HEK293 (cell line): ENCODE measurements at regions of chr12 and their contacts with region 1.

Region 1: DNA sequence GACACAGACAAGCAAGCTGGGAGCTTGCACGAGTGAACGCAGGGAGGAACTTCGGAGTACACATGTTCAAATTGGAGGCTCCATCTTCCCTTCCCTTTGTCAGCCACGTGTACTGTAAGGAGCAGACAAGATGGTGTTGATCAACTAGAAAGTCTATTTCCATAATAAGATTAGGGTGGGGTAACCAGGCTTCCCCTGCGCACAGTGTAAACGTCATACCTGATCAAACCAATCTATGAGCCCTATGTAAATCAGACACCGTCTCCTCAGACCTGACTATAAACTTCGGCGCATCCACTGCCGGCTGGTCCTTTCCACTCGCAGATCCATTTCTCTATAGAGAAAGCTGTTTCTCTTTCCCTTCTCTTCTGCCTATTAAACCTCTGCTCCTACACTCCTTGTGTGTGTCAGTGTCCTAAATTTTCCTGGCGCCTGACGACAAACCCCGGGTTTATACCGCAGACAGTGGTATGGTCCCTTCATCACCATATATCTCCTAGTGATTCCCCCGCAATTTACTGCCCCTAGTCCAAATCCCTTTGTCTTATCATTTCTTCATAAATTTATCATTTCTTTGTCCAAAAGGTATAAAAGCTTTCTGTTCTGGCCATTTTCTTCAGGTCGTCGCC is 7.5 kb upstream of the ETFBKMT start:
- H3K4me3 ChIP-seq: no peak overlapping the region
- H3K27ac ChIP-seq: no peak overlapping the region
- H3K4me1 ChIP-seq: no peaks in the 10 kb centered on the region
- CTCF ChIP-seq: no peak

Region 2: DNA sequence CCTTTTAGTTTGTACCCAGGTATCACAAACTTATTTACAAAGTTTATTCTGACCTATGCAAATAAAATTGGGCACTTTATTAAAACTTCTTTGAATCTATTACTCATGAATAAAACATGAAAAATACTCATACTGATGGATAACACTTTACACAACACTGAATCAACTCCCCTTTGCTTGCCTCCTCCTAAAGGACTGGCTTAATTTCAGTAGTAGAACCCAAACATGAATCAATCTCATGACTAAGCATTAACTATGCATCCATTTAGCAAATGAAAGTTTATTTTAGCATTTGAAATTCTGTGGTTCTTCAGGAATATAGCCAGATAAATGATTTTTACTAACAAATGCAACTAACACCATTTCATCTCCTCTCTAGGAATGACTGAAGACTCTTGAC is 93.5 kb before region 1 on chr12:
- CTCF ChIA-PET with region 1: no interaction called
- POLR2A ChIA-PET with region 1: no interaction called
- H3K4me3 ChIP-seq: no peak overlapping the region
- H3K27ac ChIP-seq: no peak overlapping the region
- H3K4me1 ChIP-seq: no peaks in the 10 kb centered on the region
- CTCF ChIP-seq: no peak

Region 3: GRCh38 chr12:31603546-31604009 is 48.4 kb before region 1 on chr12:
- CTCF ChIA-PET with region 1: no interaction called
- POLR2A ChIA-PET with region 1: no interaction called
- H3K4me3 ChIP-seq: no peak overlapping the region
- H3K27ac ChIP-seq: no peak overlapping the region
- H3K4me1 ChIP-seq: no peaks in the 10 kb centered on the region
- CTCF ChIP-seq: no peak

Region 4: GRCh38 chr12:31682136-31682962 is 30.3 kb after region 1 on chr12:
- CTCF ChIA-PET with region 1: interaction called, 14 read pairs
- POLR2A ChIA-PET with region 1: no interaction called
- H3K4me3 ChIP-seq: no peak overlapping the region
- H3K27ac ChIP-seq: no peak overlapping the region
- H3K4me1 ChIP-seq: no peaks in the 10 kb centered on the region
- CTCF ChIP-seq: peak; percentile 71; the same call in 1 of the 2 replicates

Region 5: DNA sequence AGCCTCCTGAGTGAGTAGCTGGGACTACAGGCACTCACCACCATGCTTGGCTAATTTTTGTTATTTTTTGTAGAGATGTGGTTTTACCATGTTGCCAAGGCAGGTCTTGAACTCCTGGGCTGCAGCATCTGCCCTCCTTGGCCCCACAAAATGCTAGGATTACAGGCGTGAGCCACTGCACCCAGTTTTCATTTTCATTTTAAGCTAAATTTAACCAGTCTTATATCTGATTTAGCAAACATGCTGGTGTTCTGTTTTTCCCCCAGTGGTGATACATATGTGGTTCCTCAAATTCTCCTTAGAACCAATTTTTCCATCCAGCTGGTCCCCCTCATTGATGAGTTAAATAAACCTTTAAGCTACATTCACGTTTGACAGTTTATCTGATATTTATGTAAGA is 410.9 kb after region 1 on chr12:
- CTCF ChIA-PET with region 1: interaction called, 18 read pairs
- POLR2A ChIA-PET with region 1: no interaction called
- H3K4me3 ChIP-seq: no peak overlapping the region
- H3K27ac ChIP-seq: no peak overlapping the region
- H3K4me1 ChIP-seq: no peaks in the 10 kb centered on the region
- CTCF ChIP-seq: no peak

Region 6: DNA sequence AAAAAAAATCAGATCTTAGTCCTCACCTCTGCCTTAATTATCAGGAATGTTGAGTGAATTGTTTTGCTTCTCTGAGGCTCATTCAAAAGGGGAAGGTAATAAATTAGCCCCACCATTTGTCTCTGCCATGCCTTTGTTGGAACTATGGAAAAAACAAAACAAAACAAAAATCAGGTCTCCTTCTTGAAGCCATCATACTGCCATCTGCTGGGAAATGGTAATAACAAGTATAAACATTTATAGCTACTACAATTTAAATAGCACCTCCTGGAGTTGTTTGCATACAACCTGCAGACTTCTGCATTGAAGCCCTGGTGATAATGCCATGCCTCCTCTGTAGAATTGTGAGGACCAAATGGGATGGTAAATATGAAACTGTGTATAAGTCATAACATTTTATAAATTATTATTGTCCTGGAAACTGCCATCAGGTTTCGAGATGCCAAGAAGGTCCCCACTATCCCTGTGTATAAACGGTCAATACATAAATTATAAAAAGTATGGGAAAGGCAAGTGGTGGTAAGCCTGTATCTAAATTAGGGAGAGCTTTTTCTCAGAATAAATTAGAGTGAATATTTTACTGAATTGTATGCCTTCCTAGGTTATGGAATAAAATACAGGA is 660.2 kb after region 1 on chr12:
- CTCF ChIA-PET with region 1: interaction called, 11 read pairs
- POLR2A ChIA-PET with region 1: no interaction called
- H3K4me3 ChIP-seq: no peak overlapping the region
- H3K27ac ChIP-seq: no peak overlapping the region
- H3K4me1 ChIP-seq: peaks cover 19% of the 10 kb centered on the region; the same call in 1 of the 2 replicates
- CTCF ChIP-seq: peak; percentile 50; the same call in 1 of the 2 replicates